ENCODE measurements at regions of chr7 and their contacts with region 1.

Region 1: DNA sequence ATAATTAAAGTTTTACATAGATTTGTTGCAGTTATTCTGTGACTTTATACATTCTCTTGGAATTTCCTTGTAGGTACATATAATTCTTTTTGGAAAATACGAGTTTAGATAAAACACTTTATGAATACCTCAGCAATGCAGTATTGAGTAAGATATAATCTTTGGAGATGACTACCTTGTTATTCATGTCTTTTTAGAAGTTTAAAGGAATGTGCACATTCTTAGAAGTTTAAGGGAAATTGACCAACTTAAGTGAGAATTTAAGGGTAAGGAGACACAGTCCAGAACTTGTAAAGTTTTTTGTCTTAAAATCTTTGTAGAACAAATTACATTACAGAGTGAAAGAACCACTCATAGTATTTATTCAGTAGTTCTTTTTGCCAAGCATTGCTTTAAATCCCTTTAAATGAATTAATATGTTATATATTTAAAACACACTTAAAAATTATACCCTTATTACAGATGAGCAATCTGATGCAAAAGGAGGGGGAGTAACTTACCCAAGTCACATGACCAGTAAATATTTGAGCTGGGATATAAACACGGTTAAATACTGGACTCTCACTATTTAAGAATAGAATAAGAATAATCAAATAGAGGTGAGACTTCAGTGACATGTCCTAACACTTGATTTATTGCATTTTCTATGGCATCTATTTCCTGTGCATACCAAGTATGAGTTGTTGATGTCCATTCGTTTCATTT is 139.5 kb upstream of the FERD3L start:
- DNase-seq: no peak
- ATAC-seq: no peak
- H3K4me3 ChIP-seq: no peak overlapping the region
- H3K27ac ChIP-seq: no peak overlapping the region
- H3K4me1 ChIP-seq: no peaks in the 10 kb centered on the region
- H3K27me3 ChIP-seq: no peaks in the 10 kb centered on the region
- CTCF ChIP-seq: no peak

Region 2: GRCh38 chr7:18927134-18927533 is 357.6 kb before region 1 on chr7:
- intact Hi-C with region 1: no loop called
- DNase-seq: no peak
- ATAC-seq: no peak
- H3K4me3 ChIP-seq: no peak overlapping the region
- H3K27ac ChIP-seq: no peak overlapping the region
- H3K4me1 ChIP-seq: no peaks in the 10 kb centered on the region
- H3K27me3 ChIP-seq: no peaks in the 10 kb centered on the region
- CTCF ChIP-seq: no peak

Region 3: GRCh38 chr7:19079066-19079465 is 205.7 kb before region 1 on chr7:
- intact Hi-C with region 1: no loop called
- DNase-seq: no peak
- ATAC-seq: no peak
- H3K4me3 ChIP-seq: no peak overlapping the region
- H3K27ac ChIP-seq: no peak overlapping the region
- H3K4me1 ChIP-seq: no peaks in the 10 kb centered on the region
- H3K27me3 ChIP-seq: no peaks in the 10 kb centered on the region
- CTCF ChIP-seq: no peak

Region 4: GRCh38 chr7:19262826-19263225 is 21.9 kb before region 1 on chr7:
- intact Hi-C with region 1: loop called in 1 of 2 experiments (anchors 2 kb)
- DNase-seq: no peak
- ATAC-seq: no peak
- H3K4me3 ChIP-seq: no peak overlapping the region
- H3K27ac ChIP-seq: no peak overlapping the region
- H3K4me1 ChIP-seq: no peaks in the 10 kb centered on the region
- H3K27me3 ChIP-seq: no peaks in the 10 kb centered on the region
- CTCF ChIP-seq: no peak

Measured in psoas muscle (tissue), 8 donors.